Activated T-helper 1 cell treated with anti-CD3 and anti-CD28 coated beads, Interleukin-12 subunit alpha, Interleukin-12 subunit beta, Interleukin-2, Interleukin-4 antibody, amounts not matched to agents 30 ng/mL and 10 ng/mL and 1 ng/mL, durations not matched to agents 14 hours and 24 hours and 36 hours (primary cell): ENCODE measurements at regions of chr1 and their contacts with region 1.

Region 1: DNA sequence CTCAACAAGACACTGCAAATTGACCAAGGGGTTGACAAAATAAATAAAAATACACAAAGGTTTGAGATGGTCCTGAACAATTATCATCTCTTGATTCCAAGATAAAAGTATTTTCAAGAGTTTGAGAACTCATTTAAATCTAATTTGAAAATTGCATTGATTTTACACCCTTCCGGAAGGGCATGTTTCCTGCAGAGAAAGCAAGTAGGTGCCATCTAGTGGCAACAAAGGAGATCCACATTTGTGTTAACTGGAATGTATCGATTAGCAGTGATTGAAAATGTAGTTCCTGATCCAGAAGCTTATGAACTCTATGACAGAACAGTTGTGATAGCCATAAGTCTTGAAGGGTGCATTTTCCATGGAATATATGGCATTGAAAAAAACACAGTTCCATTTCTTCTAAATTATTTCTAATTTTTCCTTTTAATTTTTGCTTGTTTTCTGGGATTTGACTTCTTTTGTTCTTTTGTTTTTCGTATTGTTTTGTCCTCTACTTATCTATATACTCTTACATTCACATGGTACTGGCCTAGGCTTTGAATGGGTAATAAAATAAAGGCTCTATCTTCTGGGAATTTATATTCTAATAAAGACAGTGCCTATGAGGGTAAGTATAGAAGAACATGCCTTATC is 143.7 kb downstream of the DNM3 start:
- DNase-seq: no peak
- H3K4me3 Mint-ChIP-seq: no peak overlapping the region
- H3K27ac Mint-ChIP-seq: no peak overlapping the region
- H3K4me1 Mint-ChIP-seq: no peaks in the 10 kb centered on the region
- H3K27me3 Mint-ChIP-seq: peaks cover 7% of the 10 kb centered on the region

Region 2: GRCh38 chr1:171644805-171645483 is 340.0 kb before region 1 on chr1:
- intact Hi-C with region 1: loop called (anchors 1 kb)
- DNase-seq: peak; percentile 63
- H3K4me3 Mint-ChIP-seq: no peak overlapping the region
- H3K27ac Mint-ChIP-seq: no peak overlapping the region
- H3K4me1 Mint-ChIP-seq: peaks cover 10% of the 10 kb centered on the region
- H3K27me3 Mint-ChIP-seq: peaks cover 7% of the 10 kb centered on the region

Region 3: GRCh38 chr1:171654942-171655745 is 329.8 kb before region 1 on chr1:
- intact Hi-C with region 1: loop called (anchors 2 kb)
- DNase-seq: peak; percentile 54
- H3K4me3 Mint-ChIP-seq: peak overlapping the region; percentile 60
- H3K27ac Mint-ChIP-seq: no peak overlapping the region
- H3K4me1 Mint-ChIP-seq: peaks cover 13% of the 10 kb centered on the region
- H3K27me3 Mint-ChIP-seq: peaks cover 25% of the 10 kb centered on the region

Region 4: DNA sequence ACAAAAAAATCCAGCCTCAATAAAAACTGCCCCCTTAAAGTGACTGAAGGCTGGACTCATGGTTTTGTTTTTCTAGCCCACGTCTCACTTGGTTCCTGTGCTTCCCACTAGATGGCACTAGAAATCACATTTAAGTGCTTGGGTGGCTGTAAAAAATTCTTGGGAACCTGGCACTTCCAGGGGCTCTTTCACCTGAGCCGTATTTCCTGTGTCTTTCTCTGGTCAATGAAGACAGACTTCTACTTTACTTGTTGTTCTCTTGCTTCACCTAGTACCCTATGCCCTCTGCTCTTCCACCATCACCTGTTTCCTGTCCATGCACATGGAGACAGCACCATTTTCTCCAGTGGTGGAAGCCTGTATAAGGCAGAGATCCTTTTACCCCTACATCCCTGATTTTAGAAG is 183.5 kb before region 1 on chr1:
- intact Hi-C with region 1: loop called (anchors 1 kb)
- DNase-seq: no peak
- H3K4me3 Mint-ChIP-seq: no peak overlapping the region
- H3K27ac Mint-ChIP-seq: no peak overlapping the region
- H3K4me1 Mint-ChIP-seq: peaks cover 17% of the 10 kb centered on the region
- H3K27me3 Mint-ChIP-seq: no peaks in the 10 kb centered on the region